PC-3 (cell line): ENCODE measurements at regions of chr1 and their contacts with region 1.

Region 1: DNA sequence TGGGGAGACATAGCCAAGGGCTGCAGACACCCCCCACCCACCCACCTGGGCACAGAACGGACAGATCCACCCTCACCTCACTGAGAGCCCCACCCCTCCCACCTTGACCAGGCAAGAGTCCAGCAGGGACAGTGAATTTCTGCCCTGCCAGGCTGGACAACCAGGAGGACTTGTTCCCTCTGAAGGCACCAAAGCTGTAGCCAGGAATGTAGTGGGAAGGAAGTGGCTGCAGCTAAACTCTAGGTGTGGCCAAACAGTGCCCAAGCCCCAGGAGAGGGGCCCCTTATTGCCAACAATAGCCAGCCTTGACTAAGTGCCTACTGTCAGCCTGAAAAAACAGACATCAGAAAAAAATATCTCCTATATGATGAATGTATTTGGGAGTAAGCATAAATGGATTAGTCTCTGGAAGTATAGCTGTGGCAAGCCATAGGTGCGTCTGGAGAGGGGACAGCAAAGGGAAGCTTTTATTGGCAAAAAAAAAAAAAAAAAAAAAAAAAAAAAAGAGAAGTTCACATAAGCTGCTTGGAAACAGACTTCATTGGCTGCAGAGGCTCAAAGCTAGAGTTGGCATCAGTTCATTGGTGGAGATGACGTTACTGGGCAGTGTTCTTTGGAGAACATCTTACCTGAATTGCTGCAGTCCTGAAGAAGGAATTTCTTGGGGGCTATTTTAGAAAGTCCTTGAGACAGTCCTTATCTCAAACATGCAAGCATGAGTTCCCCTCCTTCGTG is 64.1 kb upstream of the TMEM51 start:
- DNase-seq: peak; percentile 42
- ATAC-seq: peak; percentile 55
- H3K4me3 ChIP-seq: no peak overlapping the region
- H3K27ac ChIP-seq: no peak overlapping the region
- H3K4me1 ChIP-seq: no peaks in the 10 kb centered on the region; the same call in 1 of the 2 replicates
- H3K27me3 ChIP-seq: no peaks in the 10 kb centered on the region
- CTCF ChIP-seq: no peak

Region 2: DNA sequence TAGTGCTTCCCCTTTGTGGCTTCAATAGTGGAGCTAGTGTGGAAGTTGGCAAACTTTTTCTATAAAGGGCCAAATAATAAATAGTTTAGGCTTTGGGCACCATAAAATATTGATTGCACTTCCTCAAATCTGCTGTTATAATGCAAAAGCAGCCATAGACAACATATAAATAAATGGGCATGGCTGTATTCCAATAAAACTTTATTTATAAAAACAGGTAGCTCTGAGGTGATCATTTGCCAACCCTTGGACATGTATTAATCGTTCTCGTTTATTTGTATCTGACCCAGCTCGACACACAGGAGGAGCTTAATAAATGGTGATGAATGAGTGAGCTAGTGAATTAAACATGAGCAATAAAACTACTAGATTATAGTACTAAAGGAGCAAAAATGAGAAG is 477.6 kb before region 1 on chr1:
- CTCF ChIA-PET with region 1: no interaction called
- POLR2A ChIA-PET with region 1: interaction called, 20 read pairs
- intact Hi-C with region 1: no loop called
- DNase-seq: no peak
- ATAC-seq: no peak
- H3K4me3 ChIP-seq: no peak overlapping the region
- H3K27ac ChIP-seq: no peak overlapping the region
- H3K4me1 ChIP-seq: peaks cover 9% of the 10 kb centered on the region
- H3K27me3 ChIP-seq: no peaks in the 10 kb centered on the region
- CTCF ChIP-seq: no peak

Region 3: GRCh38 chr1:15046487-15047165 is 42.8 kb before region 1 on chr1:
- CTCF ChIA-PET with region 1: no interaction called
- POLR2A ChIA-PET with region 1: no interaction called
- intact Hi-C with region 1: no loop called
- DNase-seq: peak; percentile 78
- ATAC-seq: peak; percentile 93
- H3K4me3 ChIP-seq: no peak overlapping the region
- H3K27ac ChIP-seq: no peak overlapping the region
- H3K4me1 ChIP-seq: no peaks in the 10 kb centered on the region
- H3K27me3 ChIP-seq: no peaks in the 10 kb centered on the region
- CTCF ChIP-seq: peak; percentile 96

Region 4: DNA sequence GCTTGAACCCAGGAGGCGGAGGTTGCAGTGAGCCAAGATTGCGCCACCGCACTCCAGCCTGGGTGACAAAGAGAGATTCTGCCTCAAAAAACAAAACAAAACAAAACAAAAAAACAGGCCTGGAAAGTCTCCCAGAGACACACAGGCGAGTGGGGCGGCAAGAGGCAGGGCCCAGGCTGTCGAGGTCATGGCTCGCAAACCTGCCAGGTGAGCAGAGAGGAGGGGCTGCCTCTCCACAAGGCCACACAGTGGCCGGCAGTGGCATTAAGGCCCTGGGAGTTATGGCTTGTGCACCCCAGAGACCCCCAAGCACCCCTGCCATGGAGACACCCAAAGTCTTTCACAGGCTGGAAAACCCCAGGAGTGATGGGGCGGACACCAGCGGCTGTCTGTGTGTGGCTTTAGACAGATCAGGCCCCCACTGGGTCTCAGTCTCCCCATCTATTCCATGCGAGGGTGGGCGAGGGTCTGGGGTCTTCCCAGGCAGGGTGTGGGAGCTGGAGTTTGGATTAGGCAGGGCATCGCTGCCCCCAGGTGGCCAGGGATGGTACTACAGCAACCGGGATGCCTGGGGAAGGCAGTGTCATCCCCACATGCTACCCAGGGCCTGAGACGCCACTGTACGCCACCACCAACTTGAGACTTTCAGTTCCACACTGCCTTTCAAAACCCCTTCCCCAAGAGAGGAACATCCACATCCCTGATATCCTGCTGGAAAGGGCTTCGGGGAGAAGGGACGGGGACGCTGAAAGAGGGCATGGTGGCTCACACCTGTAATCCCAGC is 341.6 kb after region 1 on chr1:
- CTCF ChIA-PET with region 1: no interaction called
- POLR2A ChIA-PET with region 1: no interaction called
- intact Hi-C with region 1: no loop called
- DNase-seq: peak; percentile 59
- ATAC-seq: peak; percentile 30
- H3K4me3 ChIP-seq: no peak overlapping the region
- H3K27ac ChIP-seq: 0 out of 2 replicates have a peak overlapping the region, but pooled peaks have one; percentile 9
- H3K4me1 ChIP-seq: peaks cover 32% of the 10 kb centered on the region
- H3K27me3 ChIP-seq: no peaks in the 10 kb centered on the region
- CTCF ChIP-seq: peak; percentile 95